MCF 10A (cell line): ENCODE measurements at regions of chr9 and their contacts with region 1.

Region 1: GRCh38 chr9:33225319-33226149 is 14.4 kb upstream of the SPINK4 start:
- DNase-seq: peak; percentile 83
- H3K4me3 Mint-ChIP-seq: no peak overlapping the region
- H3K27ac Mint-ChIP-seq: no peak overlapping the region
- H3K4me1 Mint-ChIP-seq: peaks cover 33% of the 10 kb centered on the region
- H3K27me3 Mint-ChIP-seq: no peaks in the 10 kb centered on the region
- CTCF ChIP-seq: peak; percentile 52

Region 2: DNA sequence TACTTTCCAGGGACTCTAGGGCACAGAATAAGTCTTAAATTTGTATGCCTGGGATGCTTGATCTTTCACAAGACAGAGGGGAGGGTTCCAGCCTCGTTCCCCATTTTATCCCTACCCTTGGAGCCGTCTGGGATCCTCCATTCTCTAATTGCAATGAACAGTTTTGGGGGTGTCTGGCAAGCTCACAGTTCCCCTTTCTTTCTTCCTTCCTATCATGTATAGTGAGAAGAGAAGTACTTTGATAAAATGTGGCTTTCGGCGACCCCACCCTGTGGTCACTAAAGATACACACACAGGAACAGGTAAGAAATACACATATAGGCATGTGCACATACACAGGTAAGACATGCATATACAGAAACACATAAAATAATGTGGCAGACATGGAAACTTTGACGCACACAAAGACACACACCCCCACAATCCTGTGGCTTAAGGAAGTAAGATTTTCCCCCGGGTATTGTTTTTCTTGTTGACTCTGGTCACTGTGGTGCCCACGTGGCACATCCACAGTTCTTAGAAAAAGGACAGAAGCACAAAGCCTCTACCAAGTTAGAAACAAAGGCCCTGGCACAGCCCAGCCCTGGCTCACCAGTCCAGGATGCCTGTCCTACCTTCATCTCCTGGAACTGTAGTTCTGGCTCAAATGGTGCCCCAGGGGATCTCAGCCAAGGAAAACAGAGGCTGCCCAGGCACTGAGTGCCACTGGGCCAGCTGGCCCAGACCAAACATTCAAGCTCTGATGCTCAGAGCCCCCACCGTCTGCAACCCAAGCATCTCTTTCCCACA is 142.8 kb before region 1 on chr9:
- CTCF ChIA-PET with region 1: interaction called, 32 read pairs
- POLR2A ChIA-PET with region 1: interaction called, 29 read pairs
- intact Hi-C with region 1: loop called (anchors 1 kb)
- DNase-seq: no peak
- H3K4me3 Mint-ChIP-seq: no peak overlapping the region
- H3K27ac Mint-ChIP-seq: no peak overlapping the region
- H3K4me1 Mint-ChIP-seq: peaks cover 6% of the 10 kb centered on the region
- H3K27me3 Mint-ChIP-seq: no peaks in the 10 kb centered on the region
- CTCF ChIP-seq: no peak

Region 3: DNA sequence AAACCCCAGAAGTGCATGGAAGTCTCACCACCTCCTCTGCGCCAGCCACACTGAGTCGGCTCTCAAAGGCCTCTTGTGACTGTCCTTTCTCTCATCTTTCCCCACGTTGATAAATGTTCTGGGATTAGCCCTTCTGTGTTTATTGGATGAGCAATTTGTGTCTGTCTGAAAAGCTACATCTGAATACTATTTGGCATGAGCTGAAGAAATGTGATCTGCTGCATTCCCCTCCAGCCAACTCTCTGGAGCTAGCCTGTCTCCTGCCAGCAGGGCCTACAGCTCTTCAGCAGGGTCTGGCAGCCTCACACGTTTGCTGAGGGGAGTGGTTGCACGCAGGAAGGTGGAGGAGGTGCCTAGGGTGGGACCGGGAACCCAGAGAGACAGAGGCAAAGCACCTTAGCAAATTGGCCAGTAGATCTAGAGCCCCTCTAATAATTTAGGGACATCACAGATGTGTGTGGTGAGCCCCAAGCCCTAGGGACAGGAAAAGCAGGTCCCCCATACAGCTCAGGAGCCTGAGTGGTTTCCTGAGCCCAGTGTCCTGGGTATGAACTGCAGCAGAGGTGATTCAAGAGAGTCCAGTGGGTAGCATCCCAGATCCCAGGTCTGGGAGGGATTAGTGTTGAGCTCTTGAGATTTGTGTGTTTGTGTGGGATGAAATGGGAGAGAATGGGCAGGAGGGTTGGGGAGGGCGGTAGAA is 37.9 kb before region 1 on chr9:
- CTCF ChIA-PET with region 1: interaction called, 10 read pairs
- POLR2A ChIA-PET with region 1: interaction called, 4 read pairs
- intact Hi-C with region 1: no loop called
- DNase-seq: no peak
- H3K4me3 Mint-ChIP-seq: no peak overlapping the region
- H3K27ac Mint-ChIP-seq: no peak overlapping the region
- H3K4me1 Mint-ChIP-seq: peaks cover 29% of the 10 kb centered on the region
- H3K27me3 Mint-ChIP-seq: no peaks in the 10 kb centered on the region
- CTCF ChIP-seq: no peak

Region 4: DNA sequence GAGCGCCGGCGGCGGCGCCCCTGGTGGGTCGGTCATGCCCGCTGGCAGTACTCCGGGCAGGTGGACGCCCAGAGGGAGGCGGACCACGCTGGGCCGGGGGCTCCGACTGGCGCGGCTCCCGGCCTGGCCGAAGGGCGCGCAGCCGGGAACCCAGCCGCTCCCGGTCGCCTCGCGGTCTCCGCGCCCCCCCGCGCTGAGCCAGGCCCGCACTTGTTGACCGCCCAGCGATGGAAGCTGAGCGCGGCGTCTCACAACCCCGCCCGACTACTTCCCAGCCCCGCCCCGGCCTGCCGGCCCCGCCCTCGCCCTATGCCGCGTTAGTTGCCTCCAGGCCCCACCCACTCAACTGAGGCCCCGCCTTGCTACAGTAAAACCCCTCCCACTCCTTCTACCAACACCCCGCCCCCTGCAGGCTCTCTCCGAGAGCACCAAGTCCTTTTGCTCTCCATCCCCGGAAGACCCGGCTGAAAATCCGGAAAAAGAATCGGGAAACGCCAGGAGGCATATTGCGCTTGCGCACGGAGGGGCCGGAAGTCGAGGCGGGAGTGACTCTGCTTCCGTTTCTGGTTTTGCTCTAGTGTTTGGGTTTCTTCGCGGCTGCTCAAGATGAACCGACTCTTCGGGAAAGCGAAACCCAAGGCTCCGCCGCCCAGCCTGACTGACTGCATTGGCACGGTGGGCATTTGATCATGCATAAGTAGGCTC is 39.1 kb after region 1 on chr9 and contains the starts of genes BAG1 and CHMP5:
- CTCF ChIA-PET with region 1: interaction called, 30 read pairs
- POLR2A ChIA-PET with region 1: interaction called, 387 read pairs
- intact Hi-C with region 1: loop called (anchors 1 kb)
- DNase-seq: peak; percentile 99
- H3K4me3 Mint-ChIP-seq: peak within 1 kb of the TSS; percentile 99
- H3K27ac Mint-ChIP-seq: peak within 1 kb of the TSS; percentile 95
- H3K4me1 Mint-ChIP-seq: peaks cover 33% of the 10 kb centered on the region
- H3K27me3 Mint-ChIP-seq: no peaks in the 10 kb centered on the region
- CTCF ChIP-seq: no peak
- total RNA-seq, gene BAG1: 75.7 and 91.8 TPM in 2 replicates
- total RNA-seq, gene CHMP5: 67.6 and 85.1 TPM in 2 replicates